ENCODE measurements at regions of chr11 and their contacts with region 1.

Region 1: DNA sequence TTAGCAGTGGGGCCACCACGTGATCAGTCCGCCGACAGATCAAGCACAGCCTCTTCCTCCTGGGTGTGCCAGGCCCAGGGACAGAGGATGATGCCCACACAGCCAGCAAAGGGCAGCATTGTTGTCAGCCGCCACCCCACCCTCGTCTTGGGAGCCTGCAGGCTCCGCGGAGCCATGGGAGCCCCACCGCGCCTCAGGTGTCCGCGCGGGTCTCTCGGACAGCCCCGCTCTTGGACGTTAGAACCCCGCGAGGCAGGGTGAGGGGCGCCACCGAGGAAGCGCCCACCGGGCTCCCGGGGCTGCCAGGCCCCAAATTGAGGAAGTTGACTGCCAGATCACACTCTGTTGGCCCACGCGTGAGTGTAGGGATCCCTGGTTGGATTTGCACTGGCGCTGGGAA is 83.9 kb upstream of the MS4A8 start:
- DNase-seq: no peak
- H3K4me3 Mint-ChIP-seq: no peak overlapping the region
- H3K27ac Mint-ChIP-seq: no peak overlapping the region
- H3K4me1 Mint-ChIP-seq: peaks cover 8% of the 10 kb centered on the region
- H3K27me3 Mint-ChIP-seq: peaks cover 14% of the 10 kb centered on the region
- CTCF ChIP-seq: no peak

Region 2: GRCh38 chr11:60265373-60266214 is 349.9 kb before region 1 on chr11:
- CTCF ChIA-PET with region 1: no interaction called
- intact Hi-C with region 1: loop called (anchors 1 kb)
- DNase-seq: peak; percentile 61
- H3K4me3 Mint-ChIP-seq: no peak overlapping the region
- H3K27ac Mint-ChIP-seq: no peak overlapping the region
- H3K4me1 Mint-ChIP-seq: no peaks in the 10 kb centered on the region
- H3K27me3 Mint-ChIP-seq: peaks cover 13% of the 10 kb centered on the region
- CTCF ChIP-seq: peak; percentile 72

Region 3: GRCh38 chr11:60345489-60345888 is 270.0 kb before region 1 on chr11:
- CTCF ChIA-PET with region 1: interaction called, 3 read pairs
- intact Hi-C with region 1: loop called (anchors 5 kb)
- DNase-seq: peak; percentile 63
- H3K4me3 Mint-ChIP-seq: no peak overlapping the region
- H3K27ac Mint-ChIP-seq: no peak overlapping the region
- H3K4me1 Mint-ChIP-seq: no peaks in the 10 kb centered on the region
- H3K27me3 Mint-ChIP-seq: peaks cover 35% of the 10 kb centered on the region
- CTCF ChIP-seq: peak; percentile 56

Region 4: GRCh38 chr11:60363542-60364510 is 251.7 kb before region 1 on chr11:
- CTCF ChIA-PET with region 1: interaction called, 13 read pairs
- intact Hi-C with region 1: loop called (anchors 1 kb)
- DNase-seq: peak; percentile 61
- H3K4me3 Mint-ChIP-seq: no peak overlapping the region
- H3K27ac Mint-ChIP-seq: no peak overlapping the region
- H3K4me1 Mint-ChIP-seq: no peaks in the 10 kb centered on the region
- H3K27me3 Mint-ChIP-seq: peaks cover 23% of the 10 kb centered on the region
- CTCF ChIP-seq: peak; percentile 57

Region 5: DNA sequence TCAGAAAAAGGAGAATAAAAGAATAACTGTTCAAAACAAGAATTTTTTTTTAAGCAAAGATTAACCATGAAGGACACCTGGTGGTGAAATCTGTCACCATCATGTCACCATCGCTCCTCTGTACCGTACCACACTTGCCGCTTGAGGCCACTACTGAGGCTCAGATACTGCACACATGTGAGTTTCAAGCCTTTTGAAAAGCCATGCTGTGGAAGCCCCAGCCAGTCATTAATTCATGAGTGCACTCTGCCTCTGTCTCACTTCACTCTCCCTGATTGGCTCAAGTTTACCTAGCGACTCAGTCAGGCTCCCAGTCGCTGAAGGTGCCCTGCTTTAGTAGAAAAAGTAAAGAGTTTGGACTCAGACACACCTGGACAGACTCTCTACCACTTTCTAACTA is 129.5 kb before region 1 on chr11:
- CTCF ChIA-PET with region 1: no interaction called
- intact Hi-C with region 1: loop called (anchors 5 kb)
- DNase-seq: peak; percentile 67
- H3K4me3 Mint-ChIP-seq: no peak overlapping the region
- H3K27ac Mint-ChIP-seq: no peak overlapping the region
- H3K4me1 Mint-ChIP-seq: no peaks in the 10 kb centered on the region
- H3K27me3 Mint-ChIP-seq: no peaks in the 10 kb centered on the region
- CTCF ChIP-seq: peak; percentile 82

Region 6: GRCh38 chr11:60589607-60590006 is 25.9 kb before region 1 on chr11:
- CTCF ChIA-PET with region 1: interaction called, 3 read pairs
- intact Hi-C with region 1: loop called (anchors 2 kb)
- DNase-seq: no peak
- H3K4me3 Mint-ChIP-seq: no peak overlapping the region
- H3K27ac Mint-ChIP-seq: no peak overlapping the region
- H3K4me1 Mint-ChIP-seq: no peaks in the 10 kb centered on the region
- H3K27me3 Mint-ChIP-seq: no peaks in the 10 kb centered on the region
- CTCF ChIP-seq: peak; percentile 31